ENCODE measurements at regions of chr12 and their contacts with region 1.

Region 1: DNA sequence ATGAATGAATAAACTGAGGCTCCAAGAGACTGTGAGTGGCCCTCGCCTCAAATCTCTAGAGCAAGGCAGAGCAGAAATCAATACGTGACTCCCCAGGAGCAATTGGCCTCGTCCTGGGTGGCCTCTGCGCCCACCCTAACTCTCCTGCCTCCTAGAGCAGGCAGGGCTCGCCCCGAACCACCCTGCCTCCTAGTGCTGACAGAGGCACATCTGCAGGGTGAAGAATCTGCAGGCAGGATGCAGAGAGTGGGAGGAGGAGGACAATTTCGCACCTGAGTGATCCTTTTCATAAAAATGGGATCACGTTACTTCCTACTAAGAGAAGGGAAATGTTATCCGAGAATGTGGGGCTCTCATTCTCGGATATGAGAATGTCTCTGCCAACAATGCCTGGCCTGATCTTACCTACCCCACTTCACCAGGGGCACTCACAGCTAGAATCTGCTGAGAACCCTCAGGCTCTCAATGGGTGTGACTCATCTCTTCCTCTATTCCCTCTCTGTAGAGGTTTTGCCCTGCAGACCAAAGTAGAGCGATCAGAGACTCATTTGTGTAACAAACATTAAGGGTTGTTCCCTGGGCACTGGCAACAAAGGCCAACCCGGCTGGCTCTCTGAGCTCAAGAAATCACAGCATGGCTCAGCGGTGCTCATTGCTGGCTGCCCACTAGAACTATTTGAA is 61.7 kb upstream of the BCL2L14 start:
- DNase-seq: peak; percentile 50 to 82 (median 81)
- H3K4me3 ChIP-seq: no peak overlapping the region
- H3K27ac ChIP-seq: peak overlapping the region in 1 of 2 experiments; percentile 79
- H3K4me1 ChIP-seq: peaks cover 4 to 68% (median 66%) of the 10 kb centered on the region in 4 experiments
- H3K27me3 ChIP-seq: no peaks in the 10 kb centered on the region

Region 2: GRCh38 chr12:11805043-11805442 is 204.0 kb before region 1 on chr12:
- CTCF ChIA-PET with region 1: no interaction called
- POLR2A ChIA-PET with region 1: no interaction called
- DNase-seq: peak; percentile 52 to 74 (median 69)
- H3K4me3 ChIP-seq: no peak overlapping the region
- H3K27ac ChIP-seq: peak overlapping the region; percentile 26 to 82
- H3K4me1 ChIP-seq: peaks cover 40 to 97% (median 84%) of the 10 kb centered on the region in 4 experiments
- H3K27me3 ChIP-seq: no peaks in the 10 kb centered on the region

Region 3: DNA sequence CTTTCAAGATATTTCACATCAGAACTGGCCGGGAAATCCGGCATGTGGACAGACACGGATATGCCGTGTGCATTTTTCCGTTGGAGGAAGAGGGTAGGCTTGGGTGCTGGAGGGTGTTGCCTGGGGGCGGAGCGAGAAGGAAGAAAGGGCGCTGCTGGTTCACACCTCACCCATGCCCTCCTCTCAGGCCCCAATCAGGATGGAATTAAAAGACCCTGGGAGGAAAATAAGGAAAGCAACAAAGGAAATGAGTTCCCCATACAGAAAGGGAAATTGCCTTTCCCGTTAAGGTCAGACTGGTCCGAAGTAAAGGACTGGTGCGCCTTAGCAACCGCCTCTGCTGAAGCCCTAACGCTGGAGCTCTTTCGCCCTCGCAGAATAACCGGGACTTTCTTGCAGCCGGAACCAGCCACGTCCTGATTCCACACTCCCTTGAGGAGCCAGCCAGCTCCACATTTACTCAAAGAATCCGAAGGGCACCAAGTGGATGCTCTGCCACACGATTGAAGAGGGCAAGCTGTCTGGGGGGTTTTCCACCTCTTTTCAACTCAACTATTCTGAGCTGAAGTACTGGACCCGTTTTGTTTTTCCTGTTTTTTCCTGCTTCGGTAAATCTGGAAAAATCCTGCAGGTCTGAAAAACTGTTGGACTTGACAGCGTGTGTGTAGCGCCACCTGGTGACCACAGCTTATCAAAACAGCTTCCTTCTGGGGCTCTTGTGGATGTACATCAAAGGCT is 23.9 kb after region 1 on chr12:
- CTCF ChIA-PET with region 1: interaction called, 33 read pairs
- POLR2A ChIA-PET with region 1: interaction called, 4 read pairs
- DNase-seq: peak; percentile 77 to 84 (median 77)
- H3K4me3 ChIP-seq: peak overlapping the region; percentile 46 to 81 (median 62)
- H3K27ac ChIP-seq: no peak overlapping the region
- H3K4me1 ChIP-seq: peaks cover 4 to 33% (median 20%) of the 10 kb centered on the region in 4 experiments
- H3K27me3 ChIP-seq: no peaks in the 10 kb centered on the region

Region 4: DNA sequence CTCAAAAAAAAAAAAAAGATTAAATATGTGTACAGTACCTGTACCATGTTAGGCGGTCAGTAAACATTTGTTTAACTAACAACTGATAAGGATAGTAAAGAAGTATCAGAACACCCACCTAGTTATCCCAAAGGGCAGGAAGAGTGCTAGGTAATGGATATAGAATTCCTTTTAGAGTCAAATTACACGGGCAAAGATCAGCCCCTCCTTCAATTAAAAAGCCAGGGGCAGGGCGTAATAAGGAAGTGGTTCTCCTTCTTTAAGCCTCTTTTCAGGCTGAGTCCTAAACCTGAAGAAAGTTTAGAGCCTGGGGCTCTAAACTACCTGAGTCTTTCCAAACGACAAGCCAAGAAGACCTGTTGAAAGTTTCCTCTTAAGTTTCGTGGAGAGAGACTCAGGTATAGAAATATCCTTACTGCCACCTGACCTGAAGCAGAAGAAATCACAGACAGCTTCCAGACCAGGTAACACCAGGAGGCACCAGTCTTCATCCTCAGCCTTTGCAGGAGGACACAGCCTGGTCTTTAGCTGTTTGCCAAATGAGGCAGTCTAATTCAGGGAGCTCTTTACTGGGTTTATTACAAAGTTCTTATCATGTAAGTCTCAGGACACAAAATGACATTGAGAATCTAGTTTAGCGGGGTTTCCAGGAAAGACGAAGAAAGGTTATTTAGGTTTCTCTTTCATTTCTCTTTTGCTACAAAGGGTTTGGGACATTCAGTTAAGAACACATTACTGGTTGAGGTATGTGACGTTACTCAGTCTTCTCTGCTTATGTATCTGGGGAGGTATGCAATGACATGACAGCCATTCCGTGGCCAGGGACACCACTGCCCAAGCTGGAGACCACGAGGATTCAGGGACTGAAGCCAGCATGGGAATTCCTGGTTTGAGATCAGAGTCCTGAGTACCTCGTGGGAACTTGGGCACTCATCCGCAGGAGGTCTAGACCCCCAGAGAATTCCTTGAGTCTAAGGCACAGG is 61.9 kb after region 1 on chr12 and contains the start of gene BCL2L14:
- CTCF ChIA-PET with region 1: no interaction called
- POLR2A ChIA-PET with region 1: no interaction called
- DNase-seq: peak in 2 of 3 donors; percentile 25 to 32
- H3K4me3 ChIP-seq: peak within 1 kb of the TSS in 2 of 7 experiments; percentile 19 to 49
- H3K27ac ChIP-seq: no peak within 1 kb of the TSS
- H3K4me1 ChIP-seq: peaks cover 0 to 15% (median 5%) of the 10 kb centered on the region in 4 experiments
- H3K27me3 ChIP-seq: no peaks in the 10 kb centered on the region